GM18951 (cell line): ENCODE measurements at regions of chr2 and their contacts with region 1.

Region 1: GRCh38 chr2:181063696-181064095 is 83.3 kb downstream of the UBE2E3 start:
- POLR2A ChIP-seq: no peak

Region 2: GRCh38 chr2:180125245-180125962 is 938.3 kb before region 1 on chr2:
- in situ Hi-C with region 1: loop called (anchors 10 kb)
- POLR2A ChIP-seq: no peak

Region 3: DNA sequence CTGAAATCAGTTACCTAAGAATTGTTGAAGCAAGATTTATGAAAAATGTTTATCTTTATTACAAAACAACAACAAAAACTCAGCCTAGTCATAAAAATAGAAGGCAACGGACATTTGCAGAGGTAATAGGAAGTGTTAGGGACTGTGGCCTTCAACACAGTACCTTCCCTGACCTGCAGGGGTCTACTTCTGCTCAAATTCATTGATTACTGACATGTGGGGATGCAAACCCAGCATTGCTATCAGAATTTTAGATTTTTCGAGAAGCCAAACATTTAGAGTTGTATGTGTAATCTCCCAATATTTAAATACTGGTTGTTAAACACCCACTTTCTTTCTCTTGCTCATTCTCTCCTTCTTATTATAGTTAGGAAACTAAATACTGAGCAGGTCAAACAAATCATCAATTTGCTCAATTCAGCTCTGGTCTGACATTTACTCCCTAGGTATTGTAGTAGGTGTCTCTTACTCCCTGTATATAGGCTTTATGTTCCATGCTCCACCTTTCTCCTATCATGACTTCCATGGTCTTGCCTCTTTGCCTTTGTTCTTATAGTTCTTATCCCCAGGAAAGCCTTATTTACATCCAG is 115.2 kb after region 1 on chr2:
- in situ Hi-C with region 1: no loop called
- POLR2A ChIP-seq: no peak